Activated naive CD8-positive, alpha-beta T cell treated with anti-CD3 and anti-CD28 coated beads, Interleukin-2, amount 10 ng/mL, durations not matched to agents 7 days and 5 days (primary cell): ENCODE measurements at regions of chr12 and their contacts with region 1.

Region 1: DNA sequence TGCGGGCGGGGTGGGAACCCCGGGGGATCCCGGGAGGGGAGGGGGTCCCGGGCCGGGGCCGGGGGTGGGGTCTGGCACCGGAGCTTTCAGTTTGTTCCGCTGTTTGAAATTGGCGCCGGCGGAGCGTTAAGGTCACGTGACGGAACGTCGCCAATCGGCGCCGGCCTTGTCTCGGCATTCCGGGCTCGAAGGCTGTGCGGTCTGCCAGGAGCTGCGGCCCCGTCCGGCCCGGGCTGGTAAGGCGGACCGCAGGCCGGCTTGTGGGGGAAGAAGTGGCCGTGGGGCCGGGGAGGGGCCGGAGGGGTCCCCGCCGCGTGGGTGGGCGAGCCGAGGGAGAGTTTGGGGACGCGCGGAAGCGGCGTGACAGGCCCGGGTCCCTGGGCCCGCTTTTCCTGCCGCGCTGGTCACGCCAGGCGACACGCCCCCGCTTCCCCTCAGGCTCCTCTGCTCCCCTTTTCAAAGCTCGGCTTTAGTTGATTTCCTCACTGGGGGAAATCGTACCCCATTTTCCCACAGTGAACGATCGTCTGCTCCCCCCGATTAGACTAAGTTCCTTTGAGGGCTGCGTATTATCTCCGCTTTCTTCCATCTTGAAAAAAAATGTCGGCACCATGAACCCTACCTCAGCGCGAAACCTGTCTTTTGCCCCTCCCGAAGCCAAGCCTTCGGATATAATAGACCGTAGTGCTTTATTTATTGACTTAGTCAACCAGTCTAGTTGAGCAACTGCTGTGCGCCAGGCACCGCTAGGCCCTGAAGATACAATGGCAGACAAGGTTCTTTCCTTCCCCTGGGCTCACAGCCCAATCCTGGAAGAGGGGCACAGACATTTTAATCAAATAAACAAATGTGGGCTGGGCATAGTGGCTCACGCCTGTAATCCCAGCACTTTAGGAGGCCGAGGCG is at the starts of genes FOXM1 and RHNO1:
- DNase-seq: peak; percentile 92
- ATAC-seq: peak; percentile 77
- H3K4me3 Mint-ChIP-seq: peak within 1 kb of the TSS; percentile 98
- H3K27ac Mint-ChIP-seq: peak within 1 kb of the TSS; percentile 96
- H3K4me1 Mint-ChIP-seq: peaks cover 28% of the 10 kb centered on the region
- H3K27me3 Mint-ChIP-seq: no peaks in the 10 kb centered on the region
- total RNA-seq, gene FOXM1: 73.9 to 86.9 TPM
- total RNA-seq, gene RHNO1: 50.3 to 53.8 TPM

Region 2: GRCh38 chr12:2794736-2795289 is 82.5 kb before region 1 on chr12 and contains the start of gene FKBP4:
- POLR2A ChIA-PET with region 1: interaction called, 12 read pairs
- DNase-seq: peak; percentile 90
- ATAC-seq: peak; percentile 87
- H3K4me3 Mint-ChIP-seq: peak within 1 kb of the TSS; percentile 87
- H3K27ac Mint-ChIP-seq: peak within 1 kb of the TSS; percentile 63
- H3K4me1 Mint-ChIP-seq: peaks cover 30% of the 10 kb centered on the region
- H3K27me3 Mint-ChIP-seq: peaks cover 7% of the 10 kb centered on the region
- total RNA-seq, gene FKBP4: 62.3 to 67.7 TPM

Region 3: DNA sequence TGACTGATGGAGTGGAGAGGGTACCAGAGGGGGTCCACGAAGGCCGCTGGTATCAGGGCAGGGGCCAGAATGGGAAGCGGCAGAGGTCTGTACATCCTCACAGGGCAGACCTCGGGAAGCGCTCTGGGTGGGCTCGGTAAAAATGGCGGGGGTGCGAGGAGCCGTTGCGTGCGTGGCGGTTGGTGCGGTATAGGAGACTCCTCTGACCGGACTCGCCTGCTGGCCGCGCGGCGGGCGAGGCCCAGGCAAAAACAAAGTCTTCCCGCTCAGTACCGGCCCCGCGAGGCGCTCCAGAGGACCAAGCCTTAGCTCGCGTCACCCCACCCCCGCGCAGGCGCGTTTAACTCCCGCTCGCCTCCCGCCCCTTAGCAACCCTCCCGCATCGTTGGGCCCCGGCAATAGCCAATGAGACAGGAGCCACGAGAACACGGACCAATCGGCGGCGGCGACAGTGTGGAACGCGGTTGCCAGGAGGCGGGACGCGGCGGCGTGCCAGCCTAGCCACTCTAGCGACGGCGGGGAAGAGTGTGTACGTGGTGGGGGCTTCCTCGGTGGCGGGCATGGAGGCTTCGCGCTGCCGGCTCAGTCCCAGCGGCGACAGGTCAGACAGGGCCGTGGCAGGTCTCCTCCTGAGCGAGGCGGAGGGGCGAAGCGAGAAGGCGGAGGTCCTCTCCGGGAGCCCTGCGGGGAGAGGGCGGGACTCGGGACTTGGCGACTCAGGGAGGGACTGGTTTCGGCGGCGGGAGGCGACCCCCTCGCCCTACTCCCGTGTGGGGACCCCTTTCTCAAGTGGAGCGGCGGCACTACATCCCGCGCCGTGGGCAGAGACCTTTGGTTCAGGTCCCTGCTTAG is 13.3 kb after region 1 on chr12 and contains the start of gene TULP3:
- POLR2A ChIA-PET with region 1: interaction called, 18 read pairs
- DNase-seq: peak; percentile 95
- ATAC-seq: peak; percentile 98
- H3K4me3 Mint-ChIP-seq: peak within 1 kb of the TSS; percentile 96
- H3K27ac Mint-ChIP-seq: peak within 1 kb of the TSS; percentile 83
- H3K4me1 Mint-ChIP-seq: peaks cover 24% of the 10 kb centered on the region
- H3K27me3 Mint-ChIP-seq: no peaks in the 10 kb centered on the region
- total RNA-seq, gene TULP3: 8.1 TPM

Region 4: DNA sequence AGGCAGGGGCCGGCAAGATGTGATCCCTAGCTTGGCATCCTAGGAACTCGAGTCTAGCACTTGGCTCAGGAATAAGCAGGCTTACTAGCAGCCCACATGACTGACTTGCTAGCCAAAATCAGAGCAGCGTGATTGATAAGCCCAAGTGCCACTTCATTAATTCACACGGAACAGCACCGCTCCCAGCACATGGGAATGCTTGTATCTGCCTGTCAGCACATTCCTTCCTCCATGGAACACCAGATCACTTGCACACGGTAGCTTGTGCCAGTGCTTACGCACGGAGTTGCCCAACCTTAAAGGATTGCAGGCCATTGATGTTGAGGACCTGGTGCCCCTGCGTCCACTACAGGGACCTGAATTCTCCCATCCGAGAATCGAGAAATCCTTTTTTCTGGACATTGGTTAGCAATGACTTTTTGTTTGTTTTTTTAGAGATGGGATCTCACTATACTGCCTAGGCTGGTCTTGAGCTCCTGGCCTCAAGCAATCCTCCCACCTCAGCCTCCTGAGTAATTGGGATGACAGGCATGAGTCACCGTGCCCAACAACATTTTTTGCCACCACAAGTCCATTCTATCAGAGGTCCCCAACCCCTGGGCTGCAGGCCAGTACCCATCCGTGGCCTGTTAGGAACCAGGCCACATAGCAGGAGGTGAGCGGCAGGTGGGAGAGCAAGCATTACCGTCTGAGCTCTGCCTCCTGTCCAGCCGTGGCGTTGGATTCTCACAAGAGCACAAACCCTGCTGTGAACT is 169.3 kb after region 1 on chr12:
- POLR2A ChIA-PET with region 1: no interaction called
- DNase-seq: no peak
- ATAC-seq: no peak
- H3K4me3 Mint-ChIP-seq: no peak overlapping the region
- H3K27ac Mint-ChIP-seq: no peak overlapping the region
- H3K4me1 Mint-ChIP-seq: no peaks in the 10 kb centered on the region
- H3K27me3 Mint-ChIP-seq: peaks cover 30% of the 10 kb centered on the region